T-cell (primary cell): ENCODE measurements at regions of chr7 and their contacts with region 1.

Region 1: DNA sequence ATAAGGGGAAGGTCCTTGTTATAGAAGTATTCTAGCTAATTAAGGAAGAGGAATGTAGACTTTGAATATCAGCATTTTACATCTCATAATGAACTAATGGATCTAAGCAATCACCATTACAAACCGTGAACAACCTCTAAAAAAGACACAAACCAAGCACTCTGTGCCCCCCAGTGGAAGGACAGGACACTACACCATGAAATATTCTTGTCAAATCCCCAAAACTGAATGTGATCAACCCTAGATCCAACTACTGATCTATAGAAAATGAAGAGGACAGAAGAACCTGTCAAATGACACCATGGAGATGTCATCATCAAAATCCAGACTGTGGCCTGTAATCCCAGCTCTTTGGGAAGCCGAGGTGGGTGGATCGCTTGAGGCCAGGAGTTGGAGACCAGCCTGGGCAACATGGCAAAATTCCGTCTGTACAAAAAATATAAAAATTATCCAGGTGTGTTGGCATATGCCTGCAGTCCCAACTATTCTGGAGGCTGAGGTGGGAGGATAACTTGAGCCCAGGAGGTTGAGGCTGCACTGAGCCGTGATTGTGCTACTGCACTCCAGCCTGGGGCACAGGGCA is 111.3 kb upstream of the CARD11 start:
- DNase-seq: peak in 34 of 35 experiments; percentile 13 to 82 (median 52)
- ATAC-seq: peak; percentile 60 to 71 (median 65)
- H3K4me3 ChIP-seq: no peak overlapping the region
- H3K4me3 Mint-ChIP-seq: no peak overlapping the region
- H3K27ac ChIP-seq: no peak overlapping the region
- H3K27ac Mint-ChIP-seq: no peak overlapping the region
- H3K4me1 ChIP-seq: peaks cover 0 to 2% of the 10 kb centered on the region in 2 experiments
- H3K4me1 Mint-ChIP-seq: peaks cover 6 to 19% (median 13%) of the 10 kb centered on the region in 3 donors
- H3K27me3 ChIP-seq: peaks cover 0 to 8% of the 10 kb centered on the region in 2 experiments
- H3K27me3 Mint-ChIP-seq: peaks cover 0 to 2% of the 10 kb centered on the region in 2 donors

Region 2: GRCh38 chr7:2886900-2887299 is 268.1 kb before region 1 on chr7:
- CTCF ChIA-PET with region 1: interaction called in 1 of 2 experiments, 11 read pairs
- POLR2A ChIA-PET with region 1: interaction called in 1 of 2 experiments, 4 read pairs
- DNase-seq: peak in 27 of 35 experiments; percentile 5 to 77 (median 37)
- ATAC-seq: peak; percentile 65 to 81 (median 73)
- H3K4me3 ChIP-seq: no peak overlapping the region
- H3K4me3 Mint-ChIP-seq: no peak overlapping the region
- H3K27ac ChIP-seq: no peak overlapping the region
- H3K27ac Mint-ChIP-seq: no peak overlapping the region
- H3K4me1 ChIP-seq: peaks cover 0 to 5% of the 10 kb centered on the region in 2 experiments
- H3K4me1 Mint-ChIP-seq: peaks cover 4 to 8% (median 4%) of the 10 kb centered on the region in 3 donors
- H3K27me3 ChIP-seq: peaks cover 0 to 3% of the 10 kb centered on the region in 2 experiments
- H3K27me3 Mint-ChIP-seq: no peaks in the 10 kb centered on the region

Region 3: GRCh38 chr7:3010161-3010560 is 144.8 kb before region 1 on chr7:
- CTCF ChIA-PET with region 1: interaction called, 3 read pairs
- POLR2A ChIA-PET with region 1: interaction called in 1 of 2 experiments, 22 read pairs
- DNase-seq: peak in 1 of 35 experiments; percentile 55
- ATAC-seq: peak in 2 of 4 experiments; percentile 32 to 49
- H3K4me3 ChIP-seq: no peak overlapping the region
- H3K4me3 Mint-ChIP-seq: peak overlapping the region in 2 of 3 donors; percentile 4 to 58
- H3K27ac ChIP-seq: no peak overlapping the region
- H3K27ac Mint-ChIP-seq: peak overlapping the region; percentile 53 to 61
- H3K4me1 ChIP-seq: peaks cover 9 to 42% of the 10 kb centered on the region in 2 experiments
- H3K4me1 Mint-ChIP-seq: peaks cover 79 to 85% (median 80%) of the 10 kb centered on the region in 3 donors
- H3K27me3 ChIP-seq: no peaks in the 10 kb centered on the region
- H3K27me3 Mint-ChIP-seq: no peaks in the 10 kb centered on the region

Region 4: GRCh38 chr7:3174515-3175284 is 19.7 kb after region 1 on chr7:
- CTCF ChIA-PET with region 1: no interaction called
- POLR2A ChIA-PET with region 1: no interaction called
- DNase-seq: no peak
- ATAC-seq: no peak
- H3K4me3 ChIP-seq: no peak overlapping the region
- H3K4me3 Mint-ChIP-seq: no peak overlapping the region
- H3K27ac ChIP-seq: no peak overlapping the region
- H3K27ac Mint-ChIP-seq: no peak overlapping the region
- H3K4me1 ChIP-seq: no peaks in the 10 kb centered on the region
- H3K4me1 Mint-ChIP-seq: no peaks in the 10 kb centered on the region
- H3K27me3 ChIP-seq: peaks cover 0 to 33% of the 10 kb centered on the region in 2 experiments
- H3K27me3 Mint-ChIP-seq: peaks cover 6 to 33% of the 10 kb centered on the region in 2 donors